SK-N-SH (cell line): ENCODE measurements at regions of chr7 and their contacts with region 1.

Region 1: GRCh38 chr7:38222481-38223096 is 44.5 kb downstream of the STARD3NL start:
- DNase-seq: peak; percentile 50
- H3K4me3 ChIP-seq: no peak overlapping the region; a peak in 1 of 4 replicates
- H3K27ac ChIP-seq: no peak overlapping the region
- H3K4me1 ChIP-seq: no peaks in the 10 kb centered on the region
- H3K27me3 ChIP-seq: no peaks in the 10 kb centered on the region
- CTCF ChIP-seq: peak; percentile 98
- EP300 ChIP-seq: no peak
- RAD21 ChIP-seq: peak; percentile 93

Region 2: DNA sequence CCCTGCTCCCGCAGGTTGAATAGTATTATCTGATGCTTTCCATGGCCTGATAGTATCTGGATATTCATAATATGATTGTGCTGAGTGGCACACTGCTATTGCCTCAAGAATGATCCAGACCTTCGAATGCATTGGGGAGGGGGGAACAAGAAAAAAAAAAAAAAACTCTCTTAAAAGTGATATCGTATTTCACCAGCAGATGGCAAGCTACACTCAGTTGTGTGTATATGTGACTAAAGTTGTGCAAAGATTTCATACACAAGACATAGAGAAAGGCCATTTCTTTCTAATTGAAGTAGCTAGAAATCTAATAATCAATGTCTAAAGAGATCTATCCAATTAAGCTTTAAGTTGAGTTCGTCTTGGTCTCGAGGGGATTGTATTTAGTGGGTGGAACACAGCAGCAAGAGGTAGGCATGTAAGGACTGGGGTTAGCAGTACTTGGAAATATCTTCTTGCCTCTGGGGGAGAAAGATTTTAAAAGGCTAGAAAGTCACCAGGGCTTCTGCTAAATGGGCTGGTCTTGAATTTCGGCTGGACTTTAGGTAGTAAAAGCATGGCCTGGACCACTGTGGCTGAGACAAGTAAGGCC is 321.3 kb before region 1 on chr7:
- CTCF ChIA-PET with region 1: interaction called, 55 read pairs
- POLR2A ChIA-PET with region 1: no interaction called
- DNase-seq: peak; percentile 47
- H3K4me3 ChIP-seq: peak overlapping the region in 1 of 2 experiments; percentile 4; a peak in 1 of 4 replicates
- H3K27ac ChIP-seq: no peak overlapping the region
- H3K4me1 ChIP-seq: peaks cover 0 to 8% of the 10 kb centered on the region in 2 experiments; a peak in 3 of 4 replicates
- H3K27me3 ChIP-seq: no peaks in the 10 kb centered on the region
- CTCF ChIP-seq: peak; percentile 83
- EP300 ChIP-seq: no peak
- RAD21 ChIP-seq: peak; percentile 85

Region 3: GRCh38 chr7:38195804-38196595 is 26.6 kb before region 1 on chr7:
- CTCF ChIA-PET with region 1: interaction called, 18 read pairs
- POLR2A ChIA-PET with region 1: interaction called, 3 read pairs
- DNase-seq: no peak
- H3K4me3 ChIP-seq: no peak overlapping the region
- H3K27ac ChIP-seq: peak overlapping the region in 1 of 2 experiments; percentile 45; a peak in 2 of 4 replicates
- H3K4me1 ChIP-seq: peaks cover 22 to 40% of the 10 kb centered on the region in 2 experiments; a peak in 3 of 4 replicates
- H3K27me3 ChIP-seq: no peaks in the 10 kb centered on the region
- CTCF ChIP-seq: no peak
- EP300 ChIP-seq: no peak
- RAD21 ChIP-seq: no peak

Region 4: DNA sequence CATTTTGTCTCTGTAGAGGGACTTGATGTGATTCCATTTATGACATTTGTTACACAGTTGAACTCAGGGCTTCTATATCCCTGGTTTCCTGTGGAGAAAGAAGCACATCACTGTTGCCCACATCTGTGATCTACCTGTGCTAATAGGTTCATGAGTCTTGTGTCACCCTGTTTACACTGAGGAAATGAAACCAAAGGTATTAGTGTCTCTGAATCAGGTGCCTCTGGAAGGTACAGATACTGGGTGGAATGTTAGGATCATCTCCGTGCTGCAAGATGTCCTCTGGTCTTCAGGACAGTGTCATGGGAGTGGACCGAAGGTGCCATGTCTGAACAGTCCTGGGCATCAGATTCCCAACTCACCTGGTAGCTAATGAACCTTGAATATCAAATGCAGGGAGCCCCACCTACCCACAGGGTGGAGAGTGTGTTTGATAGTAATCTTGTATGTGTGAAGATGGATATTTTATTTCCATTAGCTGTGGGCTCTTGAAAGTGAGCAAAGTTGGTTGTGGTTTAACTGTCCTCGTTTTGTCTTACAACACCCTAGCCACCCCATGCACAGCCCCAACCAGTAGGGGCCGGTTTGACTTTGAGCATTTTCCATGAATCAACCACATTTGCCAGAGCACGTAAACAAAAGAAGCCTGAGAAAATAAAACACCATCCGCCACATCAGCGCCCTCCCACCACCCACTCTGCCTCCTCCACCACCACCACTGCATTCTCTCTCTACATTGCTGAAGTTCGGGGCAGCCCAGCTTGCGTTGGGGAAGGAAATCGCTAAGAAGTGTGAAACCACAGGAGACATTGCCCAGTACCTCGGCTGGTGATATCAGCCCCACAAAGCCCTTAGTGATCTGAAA is 10.1 kb after region 1 on chr7:
- CTCF ChIA-PET with region 1: interaction called, 63 read pairs
- POLR2A ChIA-PET with region 1: interaction called, 3 read pairs
- DNase-seq: no peak
- H3K4me3 ChIP-seq: no peak overlapping the region
- H3K27ac ChIP-seq: no peak overlapping the region
- H3K4me1 ChIP-seq: peaks cover 0 to 4% of the 10 kb centered on the region in 2 experiments; a peak in 1 of 4 replicates
- H3K27me3 ChIP-seq: no peaks in the 10 kb centered on the region
- CTCF ChIP-seq: no peak
- EP300 ChIP-seq: no peak
- RAD21 ChIP-seq: no peak

Region 5: GRCh38 chr7:38973760-38974159 is 751.2 kb after region 1 on chr7:
- CTCF ChIA-PET with region 1: no interaction called
- POLR2A ChIA-PET with region 1: no interaction called
- DNase-seq: no peak
- H3K4me3 ChIP-seq: no peak overlapping the region
- H3K27ac ChIP-seq: no peak overlapping the region
- H3K4me1 ChIP-seq: no peaks in the 10 kb centered on the region
- H3K27me3 ChIP-seq: peaks cover 45% of the 10 kb centered on the region
- CTCF ChIP-seq: no peak
- EP300 ChIP-seq: no peak
- RAD21 ChIP-seq: no peak